B cell (primary cell): ENCODE measurements at regions of chr16 and their contacts with region 1.

Region 1: DNA sequence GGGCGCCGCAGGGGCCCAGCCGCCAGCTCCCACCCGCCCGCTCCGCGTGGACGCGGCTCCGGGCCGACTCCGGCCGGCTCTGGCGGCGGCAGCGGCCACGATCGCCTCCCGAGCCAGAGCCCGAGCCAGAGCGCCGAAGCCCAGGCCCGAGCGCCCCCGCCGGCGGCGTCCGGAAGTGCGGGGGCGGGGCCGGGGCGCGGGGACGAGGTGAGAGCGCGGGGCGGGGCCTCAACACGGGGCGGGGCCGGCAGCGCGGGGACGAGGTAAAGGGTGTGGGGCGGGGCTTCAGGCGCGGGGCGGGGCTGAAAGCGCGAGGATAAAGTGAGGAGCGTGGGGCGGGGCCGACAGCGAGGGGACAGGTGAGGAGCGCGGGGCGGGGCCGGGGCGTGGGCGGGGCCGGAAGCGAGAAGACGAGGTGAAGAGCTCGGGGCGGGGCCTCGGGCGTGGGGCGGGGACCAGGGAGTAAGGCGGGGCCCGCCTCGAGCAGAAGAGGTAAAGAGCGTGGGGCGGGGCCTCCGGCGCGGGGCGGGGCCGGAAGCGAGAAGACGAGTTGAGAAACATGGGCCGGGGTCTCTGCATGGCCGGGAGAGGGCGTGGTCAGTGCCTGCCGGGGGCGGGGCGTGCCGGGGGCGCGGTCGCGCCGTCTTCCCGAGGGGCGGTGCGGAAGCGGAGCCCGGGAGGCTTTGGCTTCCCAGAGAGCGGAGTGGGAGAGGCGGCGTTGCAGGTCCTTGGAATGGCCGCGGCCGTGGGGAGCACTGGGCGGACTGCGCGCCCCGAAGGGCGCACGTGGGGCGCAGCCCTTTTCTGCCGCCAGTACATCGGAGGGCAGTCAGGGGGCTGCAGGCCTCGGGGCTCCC is at the start of gene AXIN1:
- DNase-seq: peak; percentile 97
- ATAC-seq: peak; percentile 88
- H3K4me3 ChIP-seq: peak within 1 kb of the TSS; percentile 41 to 73 (median 55)
- H3K4me3 Mint-ChIP-seq: peak within 1 kb of the TSS; percentile 86
- H3K27ac ChIP-seq: peak within 1 kb of the TSS; percentile 38 to 56
- H3K27ac Mint-ChIP-seq: peak within 1 kb of the TSS; percentile 75
- H3K4me1 ChIP-seq: peaks cover 16 to 32% of the 10 kb centered on the region in 2 donors
- H3K4me1 Mint-ChIP-seq: peaks cover 31% of the 10 kb centered on the region
- H3K27me3 ChIP-seq: no peaks in the 10 kb centered on the region
- H3K27me3 Mint-ChIP-seq: no peaks in the 10 kb centered on the region
- CTCF ChIP-seq: peak; percentile 23
- total RNA-seq, gene AXIN1: 37.6 and 40.8 TPM in 2 replicates

Region 2: GRCh38 chr16:234468-235305 is 118.1 kb before region 1 on chr16 and contains the start of gene FAM234A:
- CTCF ChIA-PET with region 1: interaction called, 5 read pairs
- POLR2A ChIA-PET with region 1: interaction called, 20 read pairs
- intact Hi-C with region 1: loop called (anchors 1 kb)
- DNase-seq: peak; percentile 98
- ATAC-seq: peak; percentile 86
- H3K4me3 ChIP-seq: peak within 1 kb of the TSS; percentile 74 to 89 (median 83)
- H3K4me3 Mint-ChIP-seq: peak within 1 kb of the TSS; percentile 88
- H3K27ac ChIP-seq: peak within 1 kb of the TSS; percentile 96 to 99
- H3K27ac Mint-ChIP-seq: peak within 1 kb of the TSS; percentile 99
- H3K4me1 ChIP-seq: peaks cover 3 to 25% of the 10 kb centered on the region in 2 donors
- H3K4me1 Mint-ChIP-seq: peaks cover 16% of the 10 kb centered on the region
- H3K27me3 ChIP-seq: no peaks in the 10 kb centered on the region
- H3K27me3 Mint-ChIP-seq: no peaks in the 10 kb centered on the region
- CTCF ChIP-seq: peak; percentile 64
- total RNA-seq, gene FAM234A: 42.9 and 44.5 TPM in 2 replicates

Region 3: DNA sequence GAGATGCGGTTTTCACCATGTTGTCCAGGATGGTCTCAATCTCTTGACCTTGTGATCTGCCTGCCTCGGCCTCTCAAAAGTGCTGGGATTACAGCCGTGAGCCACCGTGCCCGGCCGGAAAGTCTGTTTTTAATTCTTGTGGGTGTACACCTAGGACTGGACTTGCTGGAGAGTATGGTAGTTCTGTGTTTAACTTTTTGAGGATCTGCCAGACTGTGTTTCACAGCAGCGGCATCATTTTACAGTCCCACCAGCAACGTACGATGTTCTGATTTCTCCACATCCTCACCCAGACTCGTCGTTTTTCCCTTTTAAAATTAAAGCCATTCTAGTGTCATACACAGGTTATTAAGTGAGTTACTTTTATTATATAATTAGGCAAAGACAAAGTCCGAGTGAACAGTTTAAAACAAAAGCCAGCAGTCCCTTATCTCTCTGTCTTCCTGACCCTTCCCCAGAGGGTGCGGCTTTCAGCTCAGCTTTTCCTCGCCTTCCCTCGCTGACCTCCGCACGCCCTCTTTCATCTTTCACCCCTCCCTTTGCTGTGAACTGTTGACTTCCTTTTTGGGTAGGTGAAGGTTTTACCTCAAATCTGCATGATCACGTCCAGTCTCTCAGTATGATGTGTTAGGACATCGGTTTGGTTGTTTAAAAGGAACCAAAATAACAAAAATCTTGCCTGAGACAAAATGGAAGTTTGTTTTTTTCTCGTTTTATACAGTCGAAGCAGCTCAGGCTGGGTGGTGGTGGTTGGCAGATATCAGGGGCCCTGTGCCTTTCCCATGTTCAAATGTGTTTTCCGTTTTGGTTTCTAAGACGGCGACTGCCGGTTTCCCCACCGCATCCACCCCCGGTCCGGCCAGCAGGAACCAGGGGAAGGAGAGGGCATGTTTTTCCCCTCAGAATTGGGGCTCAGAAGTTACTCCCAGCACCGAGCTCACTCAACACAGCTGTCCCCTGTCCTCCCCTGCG is 100.1 kb before region 1 on chr16:
- CTCF ChIA-PET with region 1: no interaction called
- POLR2A ChIA-PET with region 1: no interaction called
- intact Hi-C with region 1: no loop called
- DNase-seq: peak; percentile 40
- ATAC-seq: peak; percentile 31
- H3K4me3 ChIP-seq: peak overlapping the region in 3 of 5 experiments; percentile 15 to 33 (median 17)
- H3K4me3 Mint-ChIP-seq: peak overlapping the region; percentile 64
- H3K27ac ChIP-seq: peak overlapping the region; percentile 38 to 81
- H3K27ac Mint-ChIP-seq: peak overlapping the region; percentile 68
- H3K4me1 ChIP-seq: peaks cover 9 to 17% of the 10 kb centered on the region in 2 donors
- H3K4me1 Mint-ChIP-seq: peaks cover 8% of the 10 kb centered on the region
- H3K27me3 ChIP-seq: no peaks in the 10 kb centered on the region
- H3K27me3 Mint-ChIP-seq: no peaks in the 10 kb centered on the region
- CTCF ChIP-seq: no peak

Region 4: DNA sequence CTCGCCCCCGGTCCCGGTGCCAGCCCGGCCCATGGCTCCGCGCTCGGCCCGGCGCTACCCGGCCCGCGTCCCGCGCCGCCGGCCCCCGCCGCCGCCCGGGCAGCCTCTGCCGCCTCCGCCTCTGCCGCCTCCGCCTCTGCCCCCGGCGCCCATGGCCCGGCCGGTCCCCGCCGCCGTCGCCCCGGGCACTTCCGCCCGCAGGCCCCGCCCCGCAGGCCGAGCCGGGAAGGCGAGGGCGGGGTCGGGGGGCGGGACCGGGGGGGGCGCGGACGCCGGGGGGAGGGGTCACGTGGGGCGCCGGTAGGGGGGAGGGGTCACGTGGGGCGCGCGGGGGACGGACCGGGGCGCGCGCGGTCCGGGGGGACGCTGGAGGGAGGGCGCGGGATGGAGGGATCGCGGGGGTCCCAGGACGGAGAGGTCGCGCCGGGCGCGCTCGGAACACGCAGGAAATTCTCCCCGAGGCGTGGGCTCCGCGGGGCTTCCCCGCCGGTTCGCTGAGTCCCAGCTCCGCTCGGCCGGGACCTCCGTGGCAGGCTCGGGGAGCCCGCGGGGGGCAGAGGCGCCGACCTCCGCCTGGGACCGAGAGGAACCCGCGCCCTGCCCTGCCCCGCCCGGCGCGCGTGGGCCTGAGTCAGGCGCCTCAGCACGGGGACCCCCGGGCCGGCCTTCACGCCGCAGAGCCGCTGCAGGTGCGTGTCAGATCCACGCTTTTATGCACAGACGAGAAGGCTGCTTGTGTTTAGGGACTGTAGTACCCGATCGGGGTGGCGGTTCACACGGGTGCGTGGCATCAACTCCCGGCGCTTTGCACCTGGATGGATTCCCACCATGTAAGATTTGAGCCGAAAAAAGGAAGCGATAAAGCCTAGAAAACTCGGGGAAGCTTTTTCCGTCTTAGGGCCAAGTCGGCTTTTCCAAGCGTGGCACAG is 29.3 kb after region 1 on chr16 and contains the start of gene PGAP6:
- CTCF ChIA-PET with region 1: no interaction called
- POLR2A ChIA-PET with region 1: no interaction called
- intact Hi-C with region 1: loop called (anchors 1 kb)
- DNase-seq: peak; percentile 80
- ATAC-seq: peak; percentile 73
- H3K4me3 ChIP-seq: peak within 1 kb of the TSS; percentile 60 to 99 (median 72)
- H3K4me3 Mint-ChIP-seq: peak within 1 kb of the TSS; percentile 97
- H3K27ac ChIP-seq: peak within 1 kb of the TSS; percentile 55 to 84
- H3K27ac Mint-ChIP-seq: peak within 1 kb of the TSS; percentile 93
- H3K4me1 ChIP-seq: peaks cover 21 to 33% of the 10 kb centered on the region in 2 donors
- H3K4me1 Mint-ChIP-seq: peaks cover 22% of the 10 kb centered on the region
- H3K27me3 ChIP-seq: no peaks in the 10 kb centered on the region
- H3K27me3 Mint-ChIP-seq: no peaks in the 10 kb centered on the region
- CTCF ChIP-seq: no peak
- total RNA-seq, gene PGAP6: 47.4 and 50.8 TPM in 2 replicates

Region 5: GRCh38 chr16:425082-425718 is 72.4 kb after region 1 on chr16 and contains the start of gene RAB11FIP3:
- CTCF ChIA-PET with region 1: interaction called, 3 read pairs
- POLR2A ChIA-PET with region 1: interaction called, 7 read pairs
- intact Hi-C with region 1: loop called (anchors 1 kb)
- DNase-seq: peak; percentile 92
- ATAC-seq: peak; percentile 91
- H3K4me3 ChIP-seq: peak within 1 kb of the TSS in 4 of 5 experiments; percentile 52 to 71 (median 71)
- H3K4me3 Mint-ChIP-seq: peak within 1 kb of the TSS; percentile 93
- H3K27ac ChIP-seq: peak within 1 kb of the TSS; percentile 51 to 92
- H3K27ac Mint-ChIP-seq: peak within 1 kb of the TSS; percentile 91
- H3K4me1 ChIP-seq: peaks cover 16 to 22% of the 10 kb centered on the region in 2 donors
- H3K4me1 Mint-ChIP-seq: peaks cover 25% of the 10 kb centered on the region
- H3K27me3 ChIP-seq: peaks cover 0 to 14% (median 2%) of the 10 kb centered on the region in 4 experiments
- H3K27me3 Mint-ChIP-seq: peaks cover 9% of the 10 kb centered on the region
- CTCF ChIP-seq: peak; percentile 49
- total RNA-seq, gene RAB11FIP3: 57.2 and 60.6 TPM in 2 replicates

Region 6: DNA sequence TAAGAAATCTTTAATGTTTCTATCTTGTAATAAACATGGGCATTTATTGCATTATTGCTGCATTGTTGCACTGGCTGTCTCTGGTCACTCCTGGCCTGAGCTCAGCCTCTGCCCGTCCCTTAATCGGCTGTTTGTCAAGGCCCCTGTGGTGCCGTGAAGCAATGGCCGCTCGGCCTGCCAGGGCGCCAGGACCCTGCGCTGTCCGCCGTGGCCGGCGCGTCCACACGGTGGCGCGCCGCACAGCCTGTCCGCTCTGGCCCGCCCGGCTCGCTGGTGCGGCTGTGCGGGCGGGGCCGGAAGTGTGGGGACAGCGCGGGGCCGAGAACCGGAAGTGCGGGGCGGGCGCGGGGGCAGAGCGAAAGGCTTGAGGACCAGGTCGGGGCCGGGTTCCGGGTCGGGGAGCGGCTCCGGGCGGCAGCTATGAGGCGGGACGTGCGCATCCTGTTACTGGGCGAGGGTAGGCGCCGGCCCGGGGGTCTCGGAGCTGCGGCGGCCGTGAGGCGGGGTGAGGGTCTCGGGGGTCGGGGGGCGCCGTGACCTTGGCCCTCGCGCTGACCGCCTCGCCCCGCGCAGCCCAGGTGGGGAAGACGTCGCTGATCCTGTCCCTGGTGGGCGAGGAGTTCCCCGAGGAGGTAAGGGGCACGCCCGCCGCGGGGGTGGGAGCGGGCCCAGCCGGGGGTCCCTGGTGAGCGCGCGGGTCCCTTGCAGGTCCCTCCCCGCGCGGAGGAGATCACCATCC is 315.2 kb after region 1 on chr16 and contains the start of gene RHOT2:
- CTCF ChIA-PET with region 1: no interaction called
- POLR2A ChIA-PET with region 1: no interaction called
- intact Hi-C with region 1: no loop called
- DNase-seq: peak; percentile 95
- ATAC-seq: peak; percentile 99
- H3K4me3 ChIP-seq: peak within 1 kb of the TSS; percentile 23 to 84 (median 73)
- H3K4me3 Mint-ChIP-seq: peak within 1 kb of the TSS; percentile 86
- H3K27ac ChIP-seq: peak within 1 kb of the TSS; percentile 41 to 79
- H3K27ac Mint-ChIP-seq: peak within 1 kb of the TSS; percentile 92
- H3K4me1 ChIP-seq: peaks cover 15 to 25% of the 10 kb centered on the region in 2 donors
- H3K4me1 Mint-ChIP-seq: peaks cover 12% of the 10 kb centered on the region
- H3K27me3 ChIP-seq: no peaks in the 10 kb centered on the region
- H3K27me3 Mint-ChIP-seq: no peaks in the 10 kb centered on the region
- CTCF ChIP-seq: peak; percentile 79
- total RNA-seq, gene RHOT2: 207 and 215 TPM in 2 replicates